ENCODE measurements at regions of chr11 and their contacts with region 1.

Region 1: GRCh38 chr11:62309991-62310390 is 11.1 kb upstream of the SCGB1D4 start:
- DNase-seq: no peak
- H3K4me3 ChIP-seq: no peak overlapping the region
- H3K4me3 Mint-ChIP-seq: peak overlapping the region in 1 of 8 donors; percentile 22
- H3K27ac ChIP-seq: no peak overlapping the region
- H3K27ac Mint-ChIP-seq: peak overlapping the region in 1 of 7 donors; percentile 6
- H3K4me1 ChIP-seq: peaks cover 9% of the 10 kb centered on the region
- H3K4me1 Mint-ChIP-seq: peaks cover 5 to 15% (median 12%) of the 10 kb centered on the region in 4 donors
- H3K27me3 ChIP-seq: peaks cover 3% of the 10 kb centered on the region
- H3K27me3 Mint-ChIP-seq: peaks cover 16 to 26% of the 10 kb centered on the region in 2 donors

Region 2: GRCh38 chr11:62123669-62124185 is 186.3 kb before region 1 on chr11 and contains the start of gene INCENP:
- CTCF ChIA-PET with region 1: no interaction called
- POLR2A ChIA-PET with region 1: no interaction called
- intact Hi-C with region 1: no loop called
- DNase-seq: peak; percentile 92 to 98 (median 96)
- H3K4me3 ChIP-seq: peak within 1 kb of the TSS; percentile 88 to 96
- H3K4me3 Mint-ChIP-seq: peak within 1 kb of the TSS; percentile 93 to 98 (median 95)
- H3K27ac ChIP-seq: peak within 1 kb of the TSS; percentile 82
- H3K27ac Mint-ChIP-seq: peak within 1 kb of the TSS; percentile 86 to 95 (median 92)
- H3K4me1 ChIP-seq: peaks cover 23% of the 10 kb centered on the region
- H3K4me1 Mint-ChIP-seq: peaks cover 15 to 42% (median 27%) of the 10 kb centered on the region in 4 donors
- H3K27me3 ChIP-seq: no peaks in the 10 kb centered on the region
- H3K27me3 Mint-ChIP-seq: peaks cover 0 to 2% of the 10 kb centered on the region in 2 donors
- total RNA-seq, gene INCENP: 28.4 to 32.1 TPM

Region 3: DNA sequence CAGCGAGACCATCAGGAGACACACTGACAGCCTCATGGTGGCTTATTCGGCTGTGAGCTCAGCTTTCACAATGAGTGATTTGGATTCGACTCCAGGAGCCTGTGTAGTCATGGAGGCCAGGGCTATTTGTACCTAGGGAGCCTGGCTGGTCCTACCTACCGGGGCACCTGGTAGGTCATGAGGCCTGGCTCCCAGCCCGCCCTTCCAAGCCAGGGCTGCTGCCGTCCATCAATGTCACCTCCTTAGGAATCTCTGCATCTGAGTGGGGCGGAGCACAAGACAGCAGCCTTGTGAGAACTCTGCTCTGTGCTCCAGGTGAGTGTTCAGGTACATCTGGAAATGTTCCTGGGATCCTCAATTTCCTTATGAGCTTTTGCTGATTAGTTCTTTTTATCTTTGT is 11.0 kb before region 1 on chr11 and contains the start of gene SCGB1D4:
- CTCF ChIA-PET with region 1: interaction called, 34 read pairs
- POLR2A ChIA-PET with region 1: no interaction called
- intact Hi-C with region 1: no loop called
- DNase-seq: no peak
- H3K4me3 ChIP-seq: no peak within 1 kb of the TSS
- H3K4me3 Mint-ChIP-seq: no peak within 1 kb of the TSS
- H3K27ac ChIP-seq: no peak within 1 kb of the TSS
- H3K27ac Mint-ChIP-seq: no peak within 1 kb of the TSS
- H3K4me1 ChIP-seq: no peaks in the 10 kb centered on the region
- H3K4me1 Mint-ChIP-seq: no peaks in the 10 kb centered on the region
- H3K27me3 ChIP-seq: peaks cover 3% of the 10 kb centered on the region
- H3K27me3 Mint-ChIP-seq: peaks cover 14 to 29% of the 10 kb centered on the region in 2 donors
- total RNA-seq, gene SCGB1D4: not detected

Region 4: DNA sequence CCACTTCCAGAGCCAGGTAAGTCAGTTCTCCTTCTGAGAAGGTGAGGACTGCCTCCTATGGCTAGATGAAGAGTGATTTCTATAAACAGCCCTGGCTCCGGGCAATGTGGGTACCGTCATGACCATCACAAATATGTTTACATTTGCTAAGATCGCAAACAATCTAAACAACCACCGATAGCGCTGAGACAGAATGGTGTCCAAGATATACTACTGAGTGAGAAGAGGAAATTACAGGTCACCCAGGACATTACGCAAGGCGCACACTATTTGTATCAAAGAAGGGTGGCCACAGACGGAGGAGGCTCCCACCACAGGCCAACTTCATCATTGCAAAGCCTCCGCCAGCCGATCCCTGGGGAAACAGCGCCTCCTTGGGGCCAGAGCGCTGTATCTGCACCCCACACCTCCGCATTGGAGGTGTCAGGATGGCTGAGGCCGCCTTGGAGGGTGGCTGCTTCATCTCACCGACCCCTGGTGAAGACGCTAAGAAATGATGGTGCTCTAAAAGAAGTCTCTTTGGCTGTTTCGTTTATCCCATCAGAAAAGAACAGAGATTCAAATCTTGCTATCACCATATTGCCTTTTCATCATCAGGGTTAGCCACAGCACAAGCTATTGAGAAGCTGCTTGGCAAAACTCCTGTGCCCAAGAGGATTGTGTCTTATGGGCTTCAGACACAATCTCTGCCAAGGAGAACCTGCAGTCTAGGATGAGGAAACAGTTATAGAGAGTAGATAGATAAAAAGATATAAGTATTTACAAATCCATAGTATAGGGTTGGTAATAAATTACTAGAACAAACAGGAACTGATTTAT is 15.0 kb after region 1 on chr11:
- CTCF ChIA-PET with region 1: interaction called, 17 read pairs
- POLR2A ChIA-PET with region 1: no interaction called
- intact Hi-C with region 1: no loop called
- DNase-seq: peak; percentile 40 to 67 (median 49)
- H3K4me3 ChIP-seq: no peak overlapping the region
- H3K4me3 Mint-ChIP-seq: no peak overlapping the region
- H3K27ac ChIP-seq: no peak overlapping the region
- H3K27ac Mint-ChIP-seq: peak overlapping the region in 2 of 7 donors; percentile 33 to 67
- H3K4me1 ChIP-seq: no peaks in the 10 kb centered on the region
- H3K4me1 Mint-ChIP-seq: peaks cover 0 to under 1% (median 0%) of the 10 kb centered on the region in 4 donors
- H3K27me3 ChIP-seq: no peaks in the 10 kb centered on the region
- H3K27me3 Mint-ChIP-seq: peaks cover 8 to 11% of the 10 kb centered on the region in 2 donors

Measured in CD4-positive, alpha-beta memory T cell (primary cell).